AG04450 (cell line): ENCODE measurements at regions of chr14 and their contacts with region 1.

Region 1: DNA sequence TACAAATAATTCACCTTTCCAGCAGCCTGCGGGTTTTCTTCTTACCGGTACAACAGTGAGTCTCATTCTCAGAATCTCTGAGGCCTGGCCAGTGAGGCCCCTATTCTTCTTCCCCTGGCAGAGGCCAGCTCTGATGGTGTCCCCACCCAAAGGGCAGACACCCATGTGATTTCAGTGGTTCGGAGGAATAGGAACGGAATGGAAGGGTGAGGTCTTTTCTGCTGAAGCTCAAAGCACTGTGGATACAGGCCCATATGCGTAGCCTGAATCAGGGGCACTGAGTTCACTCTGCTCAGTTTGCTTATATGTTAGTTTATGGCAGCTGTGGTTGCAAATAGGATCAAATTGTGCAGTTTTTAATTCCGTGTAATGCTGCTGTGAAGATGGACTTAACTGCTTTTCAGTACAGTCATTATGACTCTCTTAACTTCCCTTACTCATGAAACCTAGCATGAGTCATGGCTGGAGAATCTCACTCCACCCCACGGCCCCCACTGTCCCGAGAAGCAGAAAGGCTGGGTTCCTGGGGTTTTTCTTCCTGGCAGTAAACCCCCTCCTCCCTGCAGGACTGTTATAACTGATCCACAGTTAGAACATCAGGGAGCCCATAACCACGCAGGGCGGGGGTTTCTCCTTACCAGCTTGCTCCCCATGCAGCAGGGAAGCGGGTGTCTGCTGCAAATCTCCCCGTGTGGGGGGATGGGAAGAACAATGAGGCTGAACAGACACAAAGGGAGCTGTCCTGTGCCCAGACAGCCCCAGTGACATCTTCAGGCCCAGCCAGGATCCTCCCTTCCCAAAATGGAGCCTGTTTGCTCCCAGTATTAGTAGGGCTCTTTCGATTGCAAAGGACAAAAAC is 122.7 kb downstream of the SLC38A6 start:
- DNase-seq: peak; percentile 95
- H3K4me3 ChIP-seq: no peak overlapping the region
- H3K27ac ChIP-seq: peak overlapping the region; percentile 99
- H3K27me3 ChIP-seq: no peaks in the 10 kb centered on the region
- CTCF ChIP-seq: no peak

Region 2: GRCh38 chr14:60980811-60981632 is 122.7 kb before region 1 on chr14 and contains the starts of genes SLC38A6 and TRMT5:
- CTCF ChIA-PET with region 1: no interaction called
- POLR2A ChIA-PET with region 1: no interaction called
- DNase-seq: peak; percentile 93
- H3K4me3 ChIP-seq: peak within 1 kb of the TSS; percentile 83
- H3K27ac ChIP-seq: peak within 1 kb of the TSS; percentile 92
- H3K27me3 ChIP-seq: no peaks in the 10 kb centered on the region
- CTCF ChIP-seq: no peak
- polyA plus RNA-seq, gene SLC38A6: 43.8 and 57.3 TPM in 2 replicates
- polyA plus RNA-seq, gene TRMT5: 9.4 and 12.9 TPM in 2 replicates

Region 3: DNA sequence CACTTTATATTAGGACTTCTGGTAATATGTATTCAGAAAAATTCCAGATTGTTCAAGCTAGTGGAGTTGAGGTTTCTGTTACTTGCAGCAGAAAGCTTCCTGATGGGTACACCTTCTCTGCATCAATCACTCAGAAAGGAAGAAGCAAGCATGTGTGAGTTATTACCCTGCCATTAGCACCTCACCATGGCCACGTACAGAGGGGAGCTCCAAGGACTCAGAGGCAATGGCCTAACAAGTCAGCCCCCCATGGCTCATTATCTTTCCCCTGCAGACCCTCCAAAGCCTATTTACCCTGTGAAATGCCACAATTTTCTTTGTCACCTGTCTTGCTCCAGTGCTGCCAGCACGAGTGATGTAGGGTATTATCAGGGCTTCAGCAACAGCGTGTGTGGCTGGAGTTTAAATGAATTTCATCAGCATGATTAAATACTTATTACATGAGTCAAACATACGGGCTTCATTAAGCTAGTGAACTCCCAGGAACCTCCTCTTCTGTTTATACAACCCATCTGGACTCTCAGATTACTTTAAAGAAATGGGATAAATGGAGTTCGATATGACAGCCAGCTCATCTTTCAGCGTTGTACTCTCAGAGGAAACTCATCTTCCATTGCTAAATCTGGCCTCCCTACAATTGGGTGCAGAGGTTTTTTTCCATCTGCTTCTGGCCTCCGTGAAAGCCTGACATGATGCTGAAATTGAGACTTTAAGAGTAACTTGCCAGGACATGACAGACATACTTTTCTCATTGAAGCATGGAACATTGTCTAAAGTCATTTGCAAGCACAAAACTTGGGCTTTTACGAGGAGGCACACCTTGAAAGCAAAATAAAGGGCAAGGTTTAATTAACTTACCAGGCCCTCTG is 41.6 kb after region 1 on chr14:
- CTCF ChIA-PET with region 1: no interaction called
- POLR2A ChIA-PET with region 1: interaction called, 14 read pairs
- DNase-seq: peak; percentile 95
- H3K4me3 ChIP-seq: no peak overlapping the region
- H3K27ac ChIP-seq: peak overlapping the region; percentile 99
- H3K27me3 ChIP-seq: no peaks in the 10 kb centered on the region
- CTCF ChIP-seq: no peak

Region 4: GRCh38 chr14:61503167-61503801 is 399.6 kb after region 1 on chr14:
- CTCF ChIA-PET with region 1: no interaction called
- POLR2A ChIA-PET with region 1: no interaction called
- DNase-seq: no peak
- H3K4me3 ChIP-seq: no peak overlapping the region
- H3K27ac ChIP-seq: no peak overlapping the region
- H3K27me3 ChIP-seq: no peaks in the 10 kb centered on the region
- CTCF ChIP-seq: no peak